ENCODE measurements at regions of chr9 and their contacts with region 1.

Region 1: DNA sequence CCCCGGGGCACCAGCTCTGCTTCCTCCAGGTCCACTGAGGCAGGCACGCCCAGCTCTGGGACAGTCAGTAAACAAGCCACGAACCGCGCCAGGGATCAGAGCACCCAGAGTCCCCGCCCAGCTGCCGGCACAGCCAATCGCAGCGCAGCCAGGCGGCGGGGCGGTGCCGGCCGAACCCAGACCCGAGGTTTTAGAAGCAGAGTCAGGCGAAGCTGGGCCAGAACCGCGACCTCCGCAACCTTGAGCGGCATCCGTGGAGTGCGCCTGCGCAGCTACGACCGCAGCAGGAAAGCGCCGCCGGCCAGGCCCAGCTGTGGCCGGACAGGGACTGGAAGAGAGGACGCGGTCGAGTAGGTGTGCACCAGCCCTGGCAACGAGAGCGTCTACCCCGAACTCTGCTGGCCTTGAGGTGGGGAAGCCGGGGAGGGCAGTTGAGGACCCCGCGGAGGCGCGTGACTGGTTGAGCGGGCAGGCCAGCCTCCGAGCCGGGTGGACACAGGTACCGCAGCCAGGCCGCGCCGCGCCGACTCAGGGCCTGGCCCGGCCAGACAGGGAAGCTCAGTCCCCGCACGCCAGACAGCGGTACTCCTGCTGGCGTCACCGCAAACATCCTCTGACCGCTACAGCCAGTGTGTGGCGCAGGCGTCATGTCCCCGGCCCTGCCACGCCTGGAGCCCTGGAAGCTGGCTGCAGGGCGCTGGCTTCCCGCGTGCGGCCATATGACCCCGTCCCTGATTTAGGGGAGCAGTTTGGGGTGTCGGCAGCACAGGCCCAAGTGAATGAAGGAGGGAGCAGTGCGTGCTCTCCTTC is at the start of gene CTSL:
- DNase-seq: peak; percentile 91 to 94
- ATAC-seq: peak; percentile 91
- H3K4me3 ChIP-seq: peak within 1 kb of the TSS; percentile 71 to 94 (median 78)
- H3K27ac ChIP-seq: peak within 1 kb of the TSS; percentile 89 to 96 (median 95)
- H3K4me1 ChIP-seq: peaks cover 13 to 16% of the 10 kb centered on the region in 2 donors
- H3K27me3 ChIP-seq: no peaks in the 10 kb centered on the region
- CTCF ChIP-seq: peak in 4 of 5 experiments; percentile 14 to 34 (median 22)
- POLR2A ChIP-seq: peak; percentile 78 to 90
- total RNA-seq, gene CTSL: 37.3 to 110 (median 56.8) TPM

Region 2: GRCh38 chr9:85940832-85941621 is 1785.1 kb before region 1 on chr9 and contains the start of gene NAA35:
- in situ Hi-C with region 1: no loop called
- intact Hi-C with region 1: loop called (anchors 10 kb)
- DNase-seq: peak; percentile 97 to 98
- ATAC-seq: peak; percentile 93 to 94
- H3K4me3 ChIP-seq: peak within 1 kb of the TSS; percentile 92 to 97 (median 94)
- H3K27ac ChIP-seq: peak within 1 kb of the TSS; percentile 92 to 98 (median 97)
- H3K4me1 ChIP-seq: peaks cover 34 to 42% of the 10 kb centered on the region in 2 donors
- H3K27me3 ChIP-seq: no peaks in the 10 kb centered on the region
- CTCF ChIP-seq: no peak
- POLR2A ChIP-seq: peak; percentile 60 to 67
- total RNA-seq, gene NAA35: 22.7 to 26.9 (median 24.5) TPM

Region 3: GRCh38 chr9:87662808-87663528 is 63.1 kb before region 1 on chr9:
- in situ Hi-C with region 1: no loop called
- intact Hi-C with region 1: no loop called
- DNase-seq: peak in 1 of 2 donors; percentile 31
- ATAC-seq: no peak
- H3K4me3 ChIP-seq: no peak overlapping the region
- H3K27ac ChIP-seq: no peak overlapping the region
- H3K4me1 ChIP-seq: no peaks in the 10 kb centered on the region
- H3K27me3 ChIP-seq: no peaks in the 10 kb centered on the region
- CTCF ChIP-seq: peak; percentile 38 to 76 (median 66)
- POLR2A ChIP-seq: no peak

Region 4: GRCh38 chr9:87684627-87685219 is 41.4 kb before region 1 on chr9:
- in situ Hi-C with region 1: no loop called
- intact Hi-C with region 1: loop called (anchors 5 kb)
- DNase-seq: no peak
- ATAC-seq: peak; percentile 16 to 60
- H3K4me3 ChIP-seq: no peak overlapping the region
- H3K27ac ChIP-seq: no peak overlapping the region
- H3K4me1 ChIP-seq: no peaks in the 10 kb centered on the region
- H3K27me3 ChIP-seq: no peaks in the 10 kb centered on the region
- CTCF ChIP-seq: peak; percentile 31 to 70 (median 64)
- POLR2A ChIP-seq: no peak

Region 5: GRCh38 chr9:87859137-87859536 is 133.0 kb after region 1 on chr9:
- in situ Hi-C with region 1: no loop called
- intact Hi-C with region 1: no loop called
- DNase-seq: no peak
- ATAC-seq: no peak
- H3K4me3 ChIP-seq: no peak overlapping the region
- H3K27ac ChIP-seq: no peak overlapping the region
- H3K4me1 ChIP-seq: no peaks in the 10 kb centered on the region
- H3K27me3 ChIP-seq: no peaks in the 10 kb centered on the region
- CTCF ChIP-seq: no peak
- POLR2A ChIP-seq: no peak

Region 6: GRCh38 chr9:87872079-87872624 is 146.0 kb after region 1 on chr9:
- in situ Hi-C with region 1: no loop called
- intact Hi-C with region 1: no loop called
- DNase-seq: no peak
- ATAC-seq: no peak
- H3K4me3 ChIP-seq: no peak overlapping the region
- H3K27ac ChIP-seq: no peak overlapping the region
- H3K4me1 ChIP-seq: no peaks in the 10 kb centered on the region
- H3K27me3 ChIP-seq: no peaks in the 10 kb centered on the region
- CTCF ChIP-seq: no peak
- POLR2A ChIP-seq: no peak

Region 7: GRCh38 chr9:87973730-87974292 is 247.7 kb after region 1 on chr9:
- in situ Hi-C with region 1: no loop called
- intact Hi-C with region 1: loop called (anchors 5 kb)
- DNase-seq: no peak
- ATAC-seq: no peak
- H3K4me3 ChIP-seq: peak overlapping the region; percentile 56 to 76 (median 72)
- H3K27ac ChIP-seq: peak overlapping the region in 1 of 4 donors; percentile 58
- H3K4me1 ChIP-seq: peaks cover 3 to 9% of the 10 kb centered on the region in 2 donors
- H3K27me3 ChIP-seq: no peaks in the 10 kb centered on the region
- CTCF ChIP-seq: no peak
- POLR2A ChIP-seq: no peak

Region 8: GRCh38 chr9:88388172-88388885 is 662.2 kb after region 1 on chr9 and contains the start of gene SPIN1:
- in situ Hi-C with region 1: no loop called
- intact Hi-C with region 1: loop called (anchors 2 kb)
- DNase-seq: peak; percentile 2 to 33
- ATAC-seq: peak; percentile 71 to 82
- H3K4me3 ChIP-seq: peak within 1 kb of the TSS; percentile 59 to 70 (median 66)
- H3K27ac ChIP-seq: peak within 1 kb of the TSS; percentile 60 to 70 (median 66)
- H3K4me1 ChIP-seq: no peaks in the 10 kb centered on the region
- H3K27me3 ChIP-seq: peaks cover 0 to 6% (median 0%) of the 10 kb centered on the region in 3 donors
- CTCF ChIP-seq: peak in 4 of 5 experiments; percentile 29 to 57 (median 52)
- POLR2A ChIP-seq: peak in 1 of 2 donors; percentile 31
- total RNA-seq, gene SPIN1: 5.5 to 11.9 (median 6.6) TPM